ENCODE measurements at regions of chr16 and their contacts with region 1.

Region 1: GRCh38 chr16:57600048-57600835 is 28.2 kb upstream of the ADGRG1 start:
- DNase-seq: peak; percentile 62 to 81 (median 74)
- H3K4me3 ChIP-seq: no peak overlapping the region
- H3K27ac ChIP-seq: no peak overlapping the region
- H3K4me1 ChIP-seq: no peaks in the 10 kb centered on the region
- H3K27me3 ChIP-seq: peaks cover 6% of the 10 kb centered on the region
- CTCF ChIP-seq: peak; percentile 46 to 90 (median 74)
- POLR2A ChIP-seq: no peak

Region 2: GRCh38 chr16:57648590-57649442 is 48.6 kb after region 1 on chr16:
- intact Hi-C with region 1: loop called (anchors 5 kb)
- DNase-seq: peak; percentile 72 to 94 (median 80)
- H3K4me3 ChIP-seq: no peak overlapping the region
- H3K27ac ChIP-seq: peak overlapping the region in 2 of 5 donors; percentile 15 to 74
- H3K4me1 ChIP-seq: peaks cover 0 to 10% of the 10 kb centered on the region in 2 donors
- H3K27me3 ChIP-seq: no peaks in the 10 kb centered on the region
- CTCF ChIP-seq: peak; percentile 100
- POLR2A ChIP-seq: peak in 1 of 2 donors; percentile 33

Measured in adrenal gland (tissue), 19 donors.